OCI-LY7 (cell line): ENCODE measurements at regions of chr4 and their contacts with region 1.

Region 1: DNA sequence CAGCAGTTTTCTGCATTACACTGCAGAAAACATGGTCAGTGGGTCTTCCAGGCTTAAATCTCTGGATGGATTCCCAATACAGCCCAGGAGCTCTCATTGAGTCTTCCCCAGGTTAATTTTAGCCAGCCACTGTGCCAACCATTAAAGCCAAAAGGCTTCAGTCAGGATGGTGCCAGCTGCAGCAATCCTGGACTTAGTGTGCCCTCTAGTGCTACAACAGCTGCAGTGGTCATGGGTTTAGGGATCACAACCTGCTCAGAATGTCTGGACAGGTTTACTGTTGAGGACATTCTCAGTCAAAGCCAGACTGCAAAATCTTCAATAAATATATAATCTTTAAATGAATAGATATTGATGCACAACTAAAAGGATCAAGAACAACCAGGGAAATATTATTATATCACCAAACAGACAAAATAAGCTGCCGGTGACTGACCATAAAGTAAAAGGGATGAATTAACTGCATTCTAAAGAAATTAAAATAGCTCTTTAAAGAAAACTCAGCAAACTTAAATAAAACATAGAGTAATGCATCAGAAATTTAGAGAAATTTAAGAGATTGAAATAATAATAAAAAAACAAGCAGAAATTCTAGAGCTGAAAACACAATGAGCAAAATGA is 639.9 kb downstream of the SPOCK3 start:
- DNase-seq: peak; percentile 0
- H3K4me3 ChIP-seq: no peak overlapping the region
- H3K27ac ChIP-seq: no peak overlapping the region
- H3K4me1 ChIP-seq: no peaks in the 10 kb centered on the region
- CTCF ChIP-seq: peak; percentile 50; the same call in 1 of the 2 replicates

Region 2: DNA sequence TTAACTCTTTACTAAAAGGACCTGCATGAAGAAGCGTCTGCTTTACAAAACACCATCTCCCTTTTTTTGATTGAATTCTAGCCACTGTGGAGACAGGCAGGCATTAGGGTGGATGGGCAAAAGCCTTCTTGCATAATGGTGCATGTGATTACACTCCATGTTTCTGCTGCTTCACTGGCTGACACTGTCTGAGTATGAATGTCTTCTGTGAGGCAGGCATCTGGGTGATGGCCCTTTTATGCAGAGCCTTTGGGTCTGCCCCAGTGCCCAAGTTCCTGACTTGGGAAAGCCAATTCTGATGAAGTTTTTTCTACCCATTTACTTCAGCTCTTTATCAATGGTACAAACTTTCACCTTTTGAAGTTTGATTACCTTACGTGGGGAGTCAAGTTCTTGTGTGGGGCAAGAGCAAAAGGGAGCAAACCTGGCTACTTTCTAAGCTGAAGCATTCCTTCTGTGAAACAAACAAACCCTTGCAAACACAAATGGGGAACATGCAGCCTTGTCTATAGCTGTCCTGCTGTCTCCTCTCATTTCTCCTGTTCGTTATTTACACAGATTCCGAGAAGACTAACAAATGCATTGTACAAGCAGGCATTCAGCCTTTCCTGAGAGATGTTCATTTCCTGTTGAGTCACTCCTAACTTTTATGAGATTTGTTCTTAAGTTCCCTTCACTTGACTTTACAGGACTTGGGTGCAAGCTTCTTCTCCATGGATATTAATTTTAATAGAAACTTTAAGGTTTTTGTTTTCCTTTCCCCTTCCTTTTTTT is 419.5 kb before region 1 on chr4:
- CTCF ChIA-PET with region 1: no interaction called
- POLR2A ChIA-PET with region 1: no interaction called
- intact Hi-C with region 1: loop called (anchors 10 kb)
- DNase-seq: no peak
- H3K4me3 ChIP-seq: no peak overlapping the region
- H3K27ac ChIP-seq: no peak overlapping the region
- H3K4me1 ChIP-seq: no peaks in the 10 kb centered on the region
- CTCF ChIP-seq: no peak

Region 3: GRCh38 chr4:166506051-166506450 is 88.4 kb before region 1 on chr4:
- CTCF ChIA-PET with region 1: no interaction called
- POLR2A ChIA-PET with region 1: no interaction called
- intact Hi-C with region 1: no loop called
- DNase-seq: no peak
- H3K4me3 ChIP-seq: no peak overlapping the region
- H3K27ac ChIP-seq: no peak overlapping the region
- H3K4me1 ChIP-seq: no peaks in the 10 kb centered on the region
- CTCF ChIP-seq: no peak